CD8-positive, alpha-beta memory T cell (primary cell): ENCODE measurements at regions of chr15 and their contacts with region 1.

Region 1: GRCh38 chr15:101669348-101670143 is 17.4 kb upstream of the TM2D3 start:
- DNase-seq: no peak
- H3K4me3 ChIP-seq: no peak overlapping the region
- H3K4me3 Mint-ChIP-seq: no peak overlapping the region
- H3K27ac ChIP-seq: no peak overlapping the region
- H3K27ac Mint-ChIP-seq: peak overlapping the region in 2 of 8 donors; percentile 21 to 37
- H3K4me1 ChIP-seq: no peaks in the 10 kb centered on the region
- H3K4me1 Mint-ChIP-seq: no peaks in the 10 kb centered on the region
- H3K27me3 ChIP-seq: no peaks in the 10 kb centered on the region
- H3K27me3 Mint-ChIP-seq: no peaks in the 10 kb centered on the region

Region 2: GRCh38 chr15:101368086-101368780 is 301.3 kb before region 1 on chr15:
- CTCF ChIA-PET with region 1: no interaction called
- POLR2A ChIA-PET with region 1: no interaction called
- DNase-seq: no peak
- H3K4me3 ChIP-seq: no peak overlapping the region
- H3K4me3 Mint-ChIP-seq: no peak overlapping the region
- H3K27ac ChIP-seq: no peak overlapping the region
- H3K27ac Mint-ChIP-seq: no peak overlapping the region
- H3K4me1 ChIP-seq: no peaks in the 10 kb centered on the region
- H3K4me1 Mint-ChIP-seq: peaks cover 0 to 2% (median 1%) of the 10 kb centered on the region in 3 donors
- H3K27me3 ChIP-seq: peaks cover 4% of the 10 kb centered on the region
- H3K27me3 Mint-ChIP-seq: peaks cover 0 to 17% of the 10 kb centered on the region in 2 donors

Region 3: DNA sequence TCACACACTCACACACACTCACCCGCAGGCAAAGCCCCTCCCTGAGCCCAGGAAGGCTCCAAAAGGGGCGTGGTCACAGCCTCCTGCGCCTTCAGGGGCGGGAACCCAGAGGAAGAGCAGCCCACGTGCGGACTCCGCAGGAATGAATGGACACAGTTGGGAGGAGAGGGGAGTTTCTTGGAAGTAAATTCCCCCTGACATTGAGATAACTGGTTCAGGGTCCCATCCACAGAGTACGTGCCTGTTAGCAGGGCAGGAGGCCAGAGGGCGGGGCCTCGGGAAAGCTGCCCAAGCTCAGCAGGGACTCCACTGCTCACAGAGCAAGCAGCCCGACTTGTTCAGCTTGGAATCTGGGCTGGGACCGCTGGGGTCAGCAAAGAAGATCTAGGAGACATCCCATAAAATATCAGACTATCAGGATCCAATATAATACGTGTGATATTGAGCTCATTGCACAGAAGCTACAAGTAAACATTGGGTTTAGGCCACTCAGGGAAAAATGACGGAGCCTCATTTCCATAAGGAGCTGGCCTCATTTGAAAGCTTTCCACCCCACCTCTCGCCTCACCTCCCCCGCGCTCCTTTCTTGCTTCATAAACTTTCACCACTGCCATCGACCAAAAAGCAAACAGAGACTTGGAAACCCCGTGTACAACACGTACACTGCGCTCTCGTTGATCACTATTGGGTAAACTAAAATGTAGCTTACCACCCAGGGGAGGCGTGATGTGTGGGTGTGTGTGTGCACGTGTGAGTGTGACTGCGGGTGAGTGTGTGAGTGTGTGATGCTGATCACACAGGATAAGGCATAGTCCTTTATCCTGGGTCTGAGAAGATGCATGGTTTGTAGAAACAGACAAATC is 53.3 kb before region 1 on chr15:
- CTCF ChIA-PET with region 1: no interaction called
- POLR2A ChIA-PET with region 1: no interaction called
- DNase-seq: no peak
- H3K4me3 ChIP-seq: no peak overlapping the region
- H3K4me3 Mint-ChIP-seq: no peak overlapping the region
- H3K27ac ChIP-seq: no peak overlapping the region
- H3K27ac Mint-ChIP-seq: no peak overlapping the region
- H3K4me1 ChIP-seq: no peaks in the 10 kb centered on the region
- H3K4me1 Mint-ChIP-seq: peaks cover 0 to 1% (median 0%) of the 10 kb centered on the region in 3 donors
- H3K27me3 ChIP-seq: no peaks in the 10 kb centered on the region
- H3K27me3 Mint-ChIP-seq: no peaks in the 10 kb centered on the region

Region 4: GRCh38 chr15:101657968-101658784 is 11.4 kb before region 1 on chr15:
- CTCF ChIA-PET with region 1: interaction called, 10 read pairs
- POLR2A ChIA-PET with region 1: no interaction called
- DNase-seq: no peak
- H3K4me3 ChIP-seq: no peak overlapping the region
- H3K4me3 Mint-ChIP-seq: no peak overlapping the region
- H3K27ac ChIP-seq: no peak overlapping the region
- H3K27ac Mint-ChIP-seq: peak overlapping the region in 3 of 8 donors; percentile 5 to 72 (median 35)
- H3K4me1 ChIP-seq: peaks cover 3% of the 10 kb centered on the region
- H3K4me1 Mint-ChIP-seq: peaks cover 2 to 8% (median 5%) of the 10 kb centered on the region in 3 donors
- H3K27me3 ChIP-seq: no peaks in the 10 kb centered on the region
- H3K27me3 Mint-ChIP-seq: no peaks in the 10 kb centered on the region